ENCODE measurements at regions of chr4 and their contacts with region 1.

Region 1: DNA sequence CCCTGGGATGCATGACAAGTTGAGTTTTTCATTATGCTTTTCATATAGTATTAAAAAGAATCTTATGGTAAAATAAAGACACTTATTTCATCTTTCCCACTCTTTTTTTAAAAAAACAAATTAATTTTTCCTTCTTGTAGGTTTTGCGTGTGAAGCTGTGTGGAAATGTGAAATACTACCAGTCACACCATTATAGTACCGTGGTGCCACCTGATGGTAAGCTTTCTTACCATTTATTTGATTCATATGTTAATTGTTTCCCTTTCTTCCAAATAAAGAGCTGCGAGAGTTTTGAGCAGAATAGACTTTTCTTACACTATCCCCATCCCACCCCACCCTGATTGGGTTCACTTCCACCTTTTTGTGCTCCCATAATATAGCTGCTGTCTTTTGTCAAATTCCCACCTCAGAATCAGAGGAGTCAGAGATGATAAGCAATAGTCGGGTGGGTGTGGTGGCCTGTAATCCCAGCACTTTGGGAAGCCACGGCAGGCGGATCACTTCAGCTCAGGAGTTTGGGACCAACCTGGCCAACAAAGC is 44.3 kb downstream of the CASP6 start:
- DNase-seq: peak; percentile 25
- H3K4me3 ChIP-seq: no peak overlapping the region
- H3K27ac ChIP-seq: no peak overlapping the region
- H3K4me1 ChIP-seq: peaks cover 7% of the 10 kb centered on the region
- H3K27me3 ChIP-seq: no peaks in the 10 kb centered on the region
- CTCF ChIP-seq: peak; percentile 30; the same call in 1 of the 2 replicates

Region 2: GRCh38 chr4:109359040-109359646 is 299.8 kb before region 1 on chr4:
- CTCF ChIA-PET with region 1: no interaction called
- POLR2A ChIA-PET with region 1: interaction called, 24 read pairs
- intact Hi-C with region 1: no loop called
- DNase-seq: no peak
- H3K4me3 ChIP-seq: no peak overlapping the region
- H3K27ac ChIP-seq: no peak overlapping the region
- H3K4me1 ChIP-seq: no peaks in the 10 kb centered on the region
- H3K27me3 ChIP-seq: no peaks in the 10 kb centered on the region
- CTCF ChIP-seq: no peak

Region 3: GRCh38 chr4:109433205-109434006 is 225.5 kb before region 1 on chr4 and contains the start of gene SEC24B:
- CTCF ChIA-PET with region 1: interaction called, 3 read pairs
- POLR2A ChIA-PET with region 1: no interaction called
- intact Hi-C with region 1: loop called (anchors 5 kb)
- DNase-seq: peak; percentile 91
- H3K4me3 ChIP-seq: peak within 1 kb of the TSS; percentile 62
- H3K27ac ChIP-seq: peak within 1 kb of the TSS; percentile 91
- H3K4me1 ChIP-seq: peaks cover 29% of the 10 kb centered on the region
- H3K27me3 ChIP-seq: no peaks in the 10 kb centered on the region
- CTCF ChIP-seq: peak; percentile 69
- total RNA-seq, gene SEC24B: 39.3 and 39.6 TPM in 2 replicates

Region 4: GRCh38 chr4:109559983-109560686 is 98.8 kb before region 1 on chr4 and contains the start of gene MCUB:
- CTCF ChIA-PET with region 1: no interaction called
- POLR2A ChIA-PET with region 1: no interaction called
- intact Hi-C with region 1: loop called (anchors 5 kb)
- DNase-seq: peak; percentile 97
- H3K4me3 ChIP-seq: peak within 1 kb of the TSS; percentile 90
- H3K27ac ChIP-seq: peak within 1 kb of the TSS; percentile 80
- H3K4me1 ChIP-seq: peaks cover 25% of the 10 kb centered on the region
- H3K27me3 ChIP-seq: no peaks in the 10 kb centered on the region
- CTCF ChIP-seq: no peak
- total RNA-seq, gene MCUB: 30.0 and 35.8 TPM in 2 replicates